Transverse colon (tissue), 4 donors: ENCODE measurements at regions of chr20 and their contacts with region 1.

Region 1: DNA sequence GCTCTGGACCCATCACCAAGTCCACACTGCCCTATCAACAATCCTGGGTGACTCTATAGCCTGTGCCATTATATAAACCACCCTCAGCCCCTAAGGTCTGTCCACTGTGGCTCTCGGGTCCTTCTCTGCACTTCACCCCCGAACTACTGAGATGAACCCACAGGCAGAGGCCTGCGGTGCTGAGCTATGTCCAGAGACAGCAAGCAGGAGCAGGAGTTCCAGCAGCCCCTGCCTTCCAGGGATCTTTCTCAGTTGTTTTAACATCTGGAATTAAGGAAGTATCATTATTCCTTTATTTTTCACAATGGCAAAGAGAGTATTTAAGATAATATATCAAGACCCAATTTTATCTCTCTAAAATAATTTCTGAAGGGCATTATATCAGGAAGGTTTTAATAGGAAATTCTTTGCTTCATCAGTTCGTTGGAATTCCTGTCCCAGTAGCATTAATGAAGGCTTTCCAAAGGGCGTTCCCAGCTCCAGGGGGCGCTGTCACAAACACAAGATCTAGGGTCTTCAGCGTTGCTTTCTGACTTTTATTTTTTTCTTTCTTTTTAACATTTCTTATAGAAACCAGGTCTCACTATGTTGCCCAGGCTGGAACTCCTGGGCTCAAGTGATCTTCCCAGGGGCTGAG is 27.3 kb downstream of the RRBP1 start:
- DNase-seq: peak; percentile 52
- H3K4me3 ChIP-seq: no peak overlapping the region
- H3K27ac ChIP-seq: peak overlapping the region in 1 of 4 donors; percentile 4
- H3K4me1 ChIP-seq: peaks cover 10 to 36% (median 25%) of the 10 kb centered on the region in 4 donors
- H3K27me3 ChIP-seq: no peaks in the 10 kb centered on the region
- CTCF ChIP-seq: peak; percentile 39 to 56 (median 52)
- EP300 ChIP-seq: no peak
- POLR2A ChIP-seq: no peak

Region 2: DNA sequence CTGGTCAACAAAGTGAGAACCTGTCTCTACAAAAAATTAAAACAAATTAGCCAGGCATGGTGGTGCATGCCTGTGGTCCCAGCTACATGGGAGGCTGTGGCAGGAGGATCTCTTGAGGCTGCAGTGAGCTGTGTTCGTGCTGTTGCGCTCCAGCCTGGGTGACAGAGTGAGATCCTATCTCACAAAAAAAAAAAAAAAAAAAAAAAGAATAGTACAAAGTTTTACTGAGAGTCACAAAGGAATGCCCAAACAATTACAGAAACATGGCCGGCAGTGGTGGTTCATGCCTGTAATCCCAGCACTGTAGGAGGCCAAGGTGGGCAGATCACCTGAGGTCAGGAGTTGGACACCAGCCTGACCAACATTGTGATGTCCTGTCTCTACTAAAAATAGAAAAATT is 99.7 kb before region 1 on chr20:
- in situ Hi-C with region 1: no loop called
- intact Hi-C with region 1: no loop called
- DNase-seq: no peak
- H3K4me3 ChIP-seq: no peak overlapping the region
- H3K27ac ChIP-seq: peak overlapping the region in 3 of 4 donors; percentile 52 to 98 (median 85)
- H3K4me1 ChIP-seq: peaks cover 13 to 35% (median 25%) of the 10 kb centered on the region in 4 donors
- H3K27me3 ChIP-seq: no peaks in the 10 kb centered on the region
- CTCF ChIP-seq: no peak
- EP300 ChIP-seq: no peak
- POLR2A ChIP-seq: no peak

Region 3: GRCh38 chr20:17910828-17911294 is 256.1 kb after region 1 on chr20:
- in situ Hi-C with region 1: loop called in 1 of 4 experiments (anchors 25 kb)
- intact Hi-C with region 1: no loop called
- DNase-seq: no peak
- H3K4me3 ChIP-seq: no peak overlapping the region
- H3K27ac ChIP-seq: peak overlapping the region; percentile 50 to 72 (median 65)
- H3K4me1 ChIP-seq: peaks cover 2 to 18% (median 4%) of the 10 kb centered on the region in 4 donors
- H3K27me3 ChIP-seq: no peaks in the 10 kb centered on the region
- CTCF ChIP-seq: no peak
- EP300 ChIP-seq: no peak
- POLR2A ChIP-seq: no peak

Region 4: DNA sequence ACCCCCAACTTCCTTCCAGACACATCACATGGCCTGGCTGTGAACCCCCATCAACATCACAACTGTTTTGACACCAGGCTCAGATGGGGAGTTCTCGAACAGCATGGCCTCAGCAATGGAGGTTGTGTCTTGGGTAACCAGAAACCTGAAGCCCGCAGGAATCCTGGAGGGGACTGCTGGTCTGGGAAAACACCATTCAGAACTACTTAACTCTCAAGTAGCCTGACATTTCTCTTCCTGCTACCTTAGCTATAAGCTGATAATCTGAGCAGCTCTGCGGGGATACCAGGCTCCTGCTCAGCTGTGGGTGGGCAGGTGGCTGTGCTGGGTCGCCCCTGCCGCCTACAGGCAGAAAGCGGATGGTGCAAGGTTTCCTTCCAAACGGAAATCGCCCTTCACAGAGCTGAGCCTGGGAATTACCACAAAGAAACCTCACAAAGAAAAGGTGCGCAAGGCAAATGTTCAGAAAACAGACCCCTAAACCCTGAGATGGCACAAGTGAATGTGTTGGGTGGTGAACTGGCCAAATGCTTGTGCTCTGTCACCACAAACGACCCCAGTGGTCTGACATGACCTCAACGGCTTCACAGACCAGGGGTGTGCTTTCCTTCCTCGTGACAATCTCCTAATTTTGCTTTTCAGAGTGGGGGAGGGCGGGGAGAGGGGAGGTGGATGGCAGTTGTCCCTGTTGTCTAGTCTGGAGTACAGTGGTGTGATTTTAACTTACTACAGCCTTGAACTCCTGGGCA is 284.3 kb after region 1 on chr20:
- in situ Hi-C with region 1: loop called in 1 of 4 experiments (anchors 25 kb)
- intact Hi-C with region 1: no loop called
- DNase-seq: peak; percentile 78
- H3K4me3 ChIP-seq: no peak overlapping the region
- H3K27ac ChIP-seq: peak overlapping the region; percentile 40 to 73 (median 62)
- H3K4me1 ChIP-seq: peaks cover 19 to 43% (median 26%) of the 10 kb centered on the region in 4 donors
- H3K27me3 ChIP-seq: no peaks in the 10 kb centered on the region
- CTCF ChIP-seq: peak; percentile 86 to 94 (median 89)
- EP300 ChIP-seq: no peak
- POLR2A ChIP-seq: no peak

Region 5: DNA sequence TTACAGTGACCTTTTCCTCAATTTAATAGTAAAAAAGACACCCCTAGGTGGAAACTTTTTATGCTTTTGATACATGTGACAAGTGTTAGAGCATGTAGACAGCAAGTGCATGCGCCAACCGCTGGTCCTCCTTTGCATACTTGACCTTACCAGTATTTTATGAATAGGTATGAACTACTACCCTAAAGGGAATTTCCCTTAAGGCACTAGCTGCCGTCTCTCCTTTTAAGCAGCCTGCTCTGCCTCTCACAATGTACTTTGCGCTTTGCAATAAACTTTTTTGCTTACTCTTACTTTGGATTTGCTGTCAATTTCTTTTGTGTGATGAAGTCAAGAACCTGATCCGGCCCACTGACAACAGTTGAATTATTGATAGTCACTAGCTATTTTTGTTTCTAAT is 582.9 kb after region 1 on chr20:
- in situ Hi-C with region 1: no loop called
- intact Hi-C with region 1: no loop called
- DNase-seq: no peak
- H3K4me3 ChIP-seq: no peak overlapping the region
- H3K27ac ChIP-seq: no peak overlapping the region
- H3K4me1 ChIP-seq: no peaks in the 10 kb centered on the region
- H3K27me3 ChIP-seq: peaks cover 5% of the 10 kb centered on the region
- CTCF ChIP-seq: no peak
- EP300 ChIP-seq: no peak
- POLR2A ChIP-seq: no peak